Posterior vena cava (tissue), 2 donors: ENCODE measurements at regions of chr3 and their contacts with region 1.

Region 1: DNA sequence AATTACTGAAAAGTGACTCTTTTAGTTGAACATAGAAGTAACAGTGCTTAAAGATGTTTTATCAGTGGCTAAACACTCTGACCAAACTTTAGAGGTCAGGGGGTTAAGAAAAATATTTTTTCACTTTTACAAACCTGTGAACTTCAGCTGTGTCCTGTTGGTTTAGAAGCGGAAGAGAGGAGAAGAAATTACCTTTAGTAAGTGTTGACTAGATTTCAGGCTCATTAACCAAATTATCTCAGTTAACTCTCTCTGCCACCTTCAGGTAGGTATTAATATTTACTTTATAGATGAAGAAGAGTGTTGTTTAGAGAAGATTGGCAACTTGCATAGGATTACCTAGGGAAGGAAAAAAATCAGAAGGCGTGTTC is 151.9 kb upstream of the CMC1 start:
- DNase-seq: no peak

Region 2: GRCh38 chr3:28012830-28013229 is 76.7 kb before region 1 on chr3:
- intact Hi-C with region 1: no loop called
- DNase-seq: no peak

Region 3: GRCh38 chr3:28103861-28104260 is 14.3 kb after region 1 on chr3:
- intact Hi-C with region 1: loop called in 1 of 2 experiments (anchors 2 kb)
- DNase-seq: no peak